ENCODE measurements at regions of chr12 and their contacts with region 1.

Region 1: GRCh38 chr12:89461649-89462612 is 62.7 kb downstream of the GALNT4 start:
- DNase-seq: no peak
- H3K4me3 ChIP-seq: peak overlapping the region in 1 of 2 donors; percentile 11
- H3K27ac ChIP-seq: peak overlapping the region; percentile 20
- H3K4me1 ChIP-seq: no peaks in the 10 kb centered on the region
- H3K27me3 ChIP-seq: no peaks in the 10 kb centered on the region
- CTCF ChIP-seq: peak; percentile 39 to 79 (median 73)
- POLR2A ChIP-seq: no peak

Region 2: GRCh38 chr12:89019408-89020120 is 442.4 kb before region 1 on chr12:
- intact Hi-C with region 1: loop called (anchors 10 kb)
- DNase-seq: peak in 1 of 2 donors; percentile 89
- H3K4me3 ChIP-seq: peak overlapping the region; percentile 4 to 6
- H3K27ac ChIP-seq: no peak overlapping the region
- H3K4me1 ChIP-seq: no peaks in the 10 kb centered on the region
- H3K27me3 ChIP-seq: no peaks in the 10 kb centered on the region
- CTCF ChIP-seq: peak; percentile 52 to 90 (median 77)
- POLR2A ChIP-seq: no peak

Region 3: GRCh38 chr12:89051065-89051677 is 410.8 kb before region 1 on chr12:
- intact Hi-C with region 1: loop called (anchors 5 kb)
- DNase-seq: no peak
- H3K4me3 ChIP-seq: no peak overlapping the region
- H3K27ac ChIP-seq: no peak overlapping the region
- H3K4me1 ChIP-seq: no peaks in the 10 kb centered on the region
- H3K27me3 ChIP-seq: no peaks in the 10 kb centered on the region
- CTCF ChIP-seq: peak; percentile 61 to 87 (median 82)
- POLR2A ChIP-seq: no peak

Region 4: GRCh38 chr12:89693639-89694202 is 231.8 kb after region 1 on chr12:
- intact Hi-C with region 1: no loop called
- DNase-seq: no peak
- H3K4me3 ChIP-seq: no peak overlapping the region
- H3K27ac ChIP-seq: no peak overlapping the region
- H3K4me1 ChIP-seq: peaks cover 23% of the 10 kb centered on the region
- H3K27me3 ChIP-seq: no peaks in the 10 kb centered on the region
- CTCF ChIP-seq: no peak
- POLR2A ChIP-seq: no peak

Measured in vagina (tissue), 2 donors.